IMR-90 (cell line): ENCODE measurements at regions of chr15 and their contacts with region 1.

Region 1: GRCh38 chr15:98719137-98719740 is 70.9 kb downstream of the IGF1R start:
- DNase-seq: no peak
- ATAC-seq: peak; percentile 72
- H3K4me3 ChIP-seq: no peak overlapping the region
- H3K27ac ChIP-seq: no peak overlapping the region
- H3K4me1 ChIP-seq: peaks cover 51% of the 10 kb centered on the region
- H3K27me3 ChIP-seq: no peaks in the 10 kb centered on the region
- CTCF ChIP-seq: no peak
- POLR2A ChIP-seq: no peak
- RAD21 ChIP-seq: no peak

Region 2: DNA sequence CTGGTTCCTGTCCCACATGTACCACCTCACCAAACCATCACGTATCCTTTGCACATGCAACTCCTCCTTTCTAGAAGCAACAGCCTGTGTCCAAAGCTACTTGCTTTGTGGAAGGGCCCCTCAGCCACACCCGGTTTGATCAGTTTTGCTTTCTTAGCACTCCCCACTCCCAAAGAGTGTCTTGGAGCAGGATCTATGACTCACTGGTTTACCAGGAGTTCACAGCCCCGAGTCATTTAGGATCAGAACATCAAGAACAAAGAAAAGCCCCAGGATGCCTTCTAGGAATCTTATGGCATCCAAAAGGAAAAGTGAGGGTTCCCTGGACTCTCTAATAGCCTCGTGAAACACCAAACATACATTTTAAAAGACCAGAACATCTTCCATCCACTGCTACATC is 121.6 kb before region 1 on chr15:
- CTCF ChIA-PET with region 1: no interaction called
- POLR2A ChIA-PET with region 1: no interaction called
- dilution Hi-C with region 1: no loop called
- in situ Hi-C with region 1: no loop called
- intact Hi-C with region 1: no loop called
- DNase-seq: no peak
- ATAC-seq: no peak
- H3K4me3 ChIP-seq: no peak overlapping the region
- H3K27ac ChIP-seq: no peak overlapping the region
- H3K4me1 ChIP-seq: no peaks in the 10 kb centered on the region; the same call in 1 of the 2 replicates
- H3K27me3 ChIP-seq: peaks cover 10% of the 10 kb centered on the region
- CTCF ChIP-seq: no peak
- POLR2A ChIP-seq: no peak
- RAD21 ChIP-seq: no peak

Region 3: DNA sequence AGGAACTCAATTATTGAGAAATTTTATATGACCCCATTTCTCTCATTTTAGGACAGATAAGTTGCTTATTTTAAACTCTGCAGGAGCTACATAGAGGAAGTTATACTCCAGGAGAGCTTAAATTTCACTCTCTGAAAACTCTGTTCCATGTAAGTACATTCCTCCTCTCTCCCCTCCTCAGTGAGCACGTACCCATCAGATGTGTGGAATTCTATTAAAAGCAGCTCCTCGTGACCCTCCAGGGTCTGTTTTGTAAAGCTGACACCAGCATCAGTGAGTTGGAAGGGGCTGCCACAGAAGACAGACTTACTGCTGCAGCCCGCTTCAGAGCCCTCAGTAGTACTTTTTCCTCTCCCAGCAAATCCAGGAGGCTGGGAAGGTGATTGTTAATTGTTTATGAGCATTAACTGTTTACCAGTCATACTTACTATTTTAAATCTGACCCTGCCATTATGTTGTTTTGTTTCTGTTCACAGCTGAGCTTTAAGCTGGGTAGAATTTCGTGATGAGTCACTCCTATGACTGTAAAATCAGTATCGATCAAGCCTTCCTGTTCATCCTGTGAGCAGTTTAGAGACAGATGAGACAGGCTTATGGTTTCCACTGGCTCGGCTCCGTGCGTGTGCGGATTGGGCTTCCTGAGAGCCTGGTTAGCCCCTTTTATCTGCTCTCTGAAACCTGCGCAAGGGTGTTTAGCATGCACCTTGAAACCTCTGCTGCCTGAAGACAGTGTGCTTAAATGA is 50.5 kb before region 1 on chr15:
- CTCF ChIA-PET with region 1: no interaction called
- POLR2A ChIA-PET with region 1: no interaction called
- dilution Hi-C with region 1: no loop called
- in situ Hi-C with region 1: no loop called
- intact Hi-C with region 1: no loop called
- DNase-seq: peak; percentile 80
- ATAC-seq: peak; percentile 43
- H3K4me3 ChIP-seq: no peak overlapping the region
- H3K27ac ChIP-seq: peak overlapping the region; percentile 39; the same call in 1 of the 2 replicates
- H3K4me1 ChIP-seq: peaks cover 46% of the 10 kb centered on the region
- H3K27me3 ChIP-seq: no peaks in the 10 kb centered on the region
- CTCF ChIP-seq: no peak
- POLR2A ChIP-seq: no peak
- RAD21 ChIP-seq: no peak

Region 4: DNA sequence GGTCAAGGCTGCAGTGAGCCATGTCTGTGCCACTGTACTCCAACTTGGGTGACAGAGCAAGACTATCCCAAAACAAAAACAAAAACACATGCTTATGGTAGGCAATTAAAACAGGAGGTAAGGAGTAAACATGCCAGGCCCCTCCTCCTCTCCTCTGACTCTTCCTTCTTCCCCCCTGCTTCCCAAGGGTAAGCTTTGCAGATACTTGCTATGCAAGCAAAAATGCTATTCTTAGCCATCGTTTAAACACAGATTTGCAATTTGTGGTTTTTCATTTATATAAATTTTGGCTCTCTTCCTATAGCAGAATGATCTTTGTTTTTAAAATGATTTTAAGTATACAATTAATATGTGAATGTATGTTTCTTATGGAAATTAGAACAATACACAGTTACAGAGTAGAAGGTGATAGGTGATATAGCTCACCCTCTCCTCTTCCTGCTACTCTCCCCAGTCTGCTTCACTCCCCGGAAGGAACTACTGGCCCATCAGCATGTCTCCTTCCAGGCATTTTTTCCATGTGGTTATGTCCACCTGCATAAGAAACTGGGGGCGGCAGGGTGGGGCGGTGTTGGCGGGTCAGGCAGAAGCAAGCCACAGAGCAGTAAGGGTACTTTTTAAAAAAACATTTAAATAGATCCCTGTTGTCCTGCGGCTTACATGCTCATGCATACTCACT is 28.8 kb before region 1 on chr15:
- CTCF ChIA-PET with region 1: no interaction called
- POLR2A ChIA-PET with region 1: no interaction called
- dilution Hi-C with region 1: no loop called
- in situ Hi-C with region 1: no loop called
- intact Hi-C with region 1: loop called (anchors 2 kb)
- DNase-seq: peak; percentile 47
- ATAC-seq: peak; percentile 74
- H3K4me3 ChIP-seq: no peak overlapping the region
- H3K27ac ChIP-seq: no peak overlapping the region; the same call in 1 of the 2 replicates
- H3K4me1 ChIP-seq: peaks cover 30% of the 10 kb centered on the region
- H3K27me3 ChIP-seq: no peaks in the 10 kb centered on the region
- CTCF ChIP-seq: no peak
- POLR2A ChIP-seq: no peak
- RAD21 ChIP-seq: no peak

Region 5: DNA sequence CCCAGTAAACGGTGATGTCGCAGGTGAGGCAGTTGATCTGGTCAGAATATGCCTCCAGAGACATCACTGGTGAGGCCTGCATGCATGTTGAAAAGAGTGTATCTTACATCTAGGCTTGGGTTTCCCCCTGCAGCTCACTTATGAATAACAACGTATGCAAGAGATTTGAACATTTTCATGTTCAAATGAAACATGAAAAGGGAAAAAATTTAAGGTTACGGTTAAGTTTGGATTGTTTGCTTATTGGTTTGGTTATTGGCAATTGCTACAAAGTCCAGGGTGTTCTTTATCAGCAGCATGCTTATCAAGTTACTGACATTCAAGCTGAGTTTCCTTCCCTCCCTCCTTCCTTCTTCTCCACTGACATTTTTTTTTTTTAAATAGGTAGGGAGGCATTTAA is 52.3 kb after region 1 on chr15:
- CTCF ChIA-PET with region 1: no interaction called
- POLR2A ChIA-PET with region 1: no interaction called
- dilution Hi-C with region 1: no loop called
- in situ Hi-C with region 1: no loop called
- intact Hi-C with region 1: no loop called
- DNase-seq: peak; percentile 39
- ATAC-seq: no peak; the same call in 1 of the 2 replicates
- H3K4me3 ChIP-seq: no peak overlapping the region
- H3K27ac ChIP-seq: no peak overlapping the region
- H3K4me1 ChIP-seq: peaks cover 21% of the 10 kb centered on the region
- H3K27me3 ChIP-seq: no peaks in the 10 kb centered on the region
- CTCF ChIP-seq: 0 out of 2 replicates have a peak, but pooled peaks have one; percentile 11
- POLR2A ChIP-seq: no peak
- RAD21 ChIP-seq: peak; percentile 22; the same call in 1 of the 2 replicates

Region 6: DNA sequence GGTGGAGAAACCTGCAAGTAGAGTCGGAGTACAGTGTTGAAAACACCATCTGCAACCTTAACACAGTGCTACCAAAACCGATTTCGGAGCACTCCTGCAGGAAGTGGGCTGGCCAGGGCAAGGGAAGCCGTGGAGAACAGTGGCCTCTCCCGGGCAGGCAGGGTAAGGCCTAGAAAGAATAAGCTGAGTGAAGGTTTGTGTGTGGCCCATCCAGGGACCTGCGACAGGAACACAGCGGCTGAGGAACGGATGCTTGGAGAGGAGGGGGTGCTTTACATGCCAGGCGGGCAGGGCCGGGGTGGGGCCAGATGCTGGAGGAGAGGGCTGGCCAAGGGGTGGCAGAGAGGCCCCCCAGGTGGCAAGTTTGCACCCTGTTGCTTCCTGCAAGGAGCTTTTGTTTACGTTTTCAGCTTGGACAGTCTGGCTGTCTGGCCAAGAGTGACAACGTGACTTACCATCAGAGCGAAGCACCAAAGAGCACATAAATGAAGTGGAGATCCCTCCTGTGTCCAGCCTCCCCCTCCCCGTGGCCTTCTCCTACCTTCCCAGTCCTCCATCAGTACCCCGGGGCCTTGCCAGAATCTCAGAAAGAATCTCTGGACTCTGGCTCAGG is 131.8 kb after region 1 on chr15:
- CTCF ChIA-PET with region 1: no interaction called
- POLR2A ChIA-PET with region 1: no interaction called
- dilution Hi-C with region 1: no loop called
- in situ Hi-C with region 1: no loop called
- intact Hi-C with region 1: no loop called
- DNase-seq: peak; percentile 70
- ATAC-seq: peak; percentile 55
- H3K4me3 ChIP-seq: no peak overlapping the region
- H3K27ac ChIP-seq: peak overlapping the region; percentile 60; the same call in 1 of the 2 replicates
- H3K4me1 ChIP-seq: peaks cover 36% of the 10 kb centered on the region
- H3K27me3 ChIP-seq: no peaks in the 10 kb centered on the region
- CTCF ChIP-seq: peak; percentile 89
- POLR2A ChIP-seq: no peak
- RAD21 ChIP-seq: peak; percentile 95